Activated CD4-positive, alpha-beta T cell treated with anti-CD3 and anti-CD28 coated beads for 36 hours (primary cell): ENCODE measurements at regions of chr22 and their contacts with region 1.

Region 1: DNA sequence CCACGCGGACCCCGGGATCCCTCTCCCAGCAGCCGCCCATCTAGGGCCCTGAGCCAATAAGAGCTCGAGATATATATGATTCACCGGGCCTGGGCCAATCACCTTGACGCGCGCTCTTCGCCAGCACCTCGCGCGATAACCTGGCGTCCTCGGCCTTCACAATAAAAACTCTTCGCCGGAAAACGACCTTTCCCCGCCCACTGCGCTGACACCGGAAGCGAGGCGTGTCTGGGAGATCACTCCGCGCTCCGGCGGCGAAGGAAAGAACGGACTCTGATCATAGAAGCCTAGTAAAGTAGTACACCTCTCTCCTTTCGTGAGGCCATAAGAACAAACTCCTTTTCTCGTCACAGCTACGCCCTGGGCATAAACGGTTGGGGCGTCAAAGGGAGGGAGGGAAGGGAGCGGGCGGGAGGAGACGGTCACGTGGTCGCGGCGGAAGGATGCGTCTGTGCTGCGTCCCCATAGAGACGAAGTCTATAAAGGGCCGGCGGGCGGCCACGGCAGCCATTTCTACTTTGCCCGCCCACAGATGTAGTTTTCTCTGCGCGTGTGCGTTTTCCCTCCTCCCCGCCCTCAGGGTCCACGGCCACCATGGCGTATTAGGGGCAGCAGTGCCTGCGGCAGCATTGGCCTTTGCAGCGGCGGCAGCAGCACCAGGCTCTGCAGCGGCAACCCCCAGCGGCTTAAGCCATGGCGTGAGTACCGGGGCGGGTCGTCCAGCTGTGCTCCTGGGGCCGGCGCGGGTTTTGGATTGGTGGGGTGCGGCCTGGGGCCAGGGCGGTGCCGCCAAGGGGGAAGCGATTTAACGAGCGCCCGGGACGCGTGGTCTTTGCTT is at the start of gene ATF4:
- DNase-seq: peak; percentile 98
- ATAC-seq: peak; percentile 90
- H3K4me3 Mint-ChIP-seq: peak within 1 kb of the TSS; percentile 86
- H3K27ac Mint-ChIP-seq: peak within 1 kb of the TSS; percentile 99
- H3K4me1 Mint-ChIP-seq: peaks cover 67% of the 10 kb centered on the region
- H3K27me3 Mint-ChIP-seq: no peaks in the 10 kb centered on the region
- total RNA-seq, gene ATF4: 580 to 680 TPM

Region 2: DNA sequence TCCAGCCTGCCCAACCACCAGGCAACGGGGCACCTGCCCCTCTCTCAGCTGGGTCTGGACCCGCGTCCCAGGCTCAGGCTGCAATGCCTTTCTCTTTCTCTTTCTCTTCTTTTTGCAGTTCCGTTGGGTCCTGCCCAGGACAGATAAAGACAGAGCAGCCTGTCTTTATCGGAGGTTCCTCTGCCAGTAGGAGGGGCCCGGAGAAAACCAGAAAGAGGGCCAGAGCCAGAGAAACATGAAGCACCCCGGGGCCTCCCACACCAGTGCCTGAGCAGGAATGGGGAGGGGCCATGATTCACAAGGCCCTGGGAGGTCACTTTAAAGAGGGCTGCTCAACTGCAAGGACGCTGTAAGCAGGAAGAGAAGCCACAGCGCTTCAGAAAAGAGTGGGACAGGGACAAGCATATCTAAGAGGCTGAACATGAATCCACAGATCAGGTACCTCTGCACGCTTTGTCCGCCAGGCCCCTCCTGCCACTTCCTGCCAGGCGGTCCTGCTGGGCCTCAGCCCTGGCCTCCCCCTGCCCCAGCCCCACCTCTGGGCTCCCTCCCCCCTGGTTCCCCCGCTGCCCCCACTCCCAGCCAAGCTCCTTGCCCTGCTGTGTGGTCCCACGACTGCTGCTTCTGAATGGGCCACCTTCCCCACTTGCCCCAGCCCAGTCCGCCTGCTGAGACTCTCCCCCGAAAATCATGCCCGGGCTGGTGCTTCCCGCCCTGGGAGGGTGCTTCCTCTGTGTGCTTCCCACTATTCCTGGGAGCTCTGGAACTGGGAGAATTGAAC is 506.1 kb before region 1 on chr22 and contains the start of gene APOBEC3C:
- CTCF ChIA-PET with region 1: no interaction called
- POLR2A ChIA-PET with region 1: no interaction called
- intact Hi-C with region 1: loop called in 1 of 2 experiments (anchors 10 kb)
- DNase-seq: peak; percentile 89
- ATAC-seq: peak; percentile 96
- H3K4me3 Mint-ChIP-seq: peak within 1 kb of the TSS; percentile 93
- H3K27ac Mint-ChIP-seq: peak within 1 kb of the TSS; percentile 95
- H3K4me1 Mint-ChIP-seq: peaks cover 33% of the 10 kb centered on the region
- H3K27me3 Mint-ChIP-seq: no peaks in the 10 kb centered on the region
- total RNA-seq, gene APOBEC3C: 75.3 to 98.5 TPM

Region 3: GRCh38 chr22:39395936-39396796 is 124.1 kb before region 1 on chr22:
- CTCF ChIA-PET with region 1: no interaction called
- POLR2A ChIA-PET with region 1: interaction called, 9 read pairs
- intact Hi-C with region 1: loop called (anchors 1 to 10 kb)
- DNase-seq: no peak
- ATAC-seq: no peak
- H3K4me3 Mint-ChIP-seq: no peak overlapping the region
- H3K27ac Mint-ChIP-seq: no peak overlapping the region
- H3K4me1 Mint-ChIP-seq: peaks cover 9% of the 10 kb centered on the region
- H3K27me3 Mint-ChIP-seq: no peaks in the 10 kb centered on the region

Region 4: DNA sequence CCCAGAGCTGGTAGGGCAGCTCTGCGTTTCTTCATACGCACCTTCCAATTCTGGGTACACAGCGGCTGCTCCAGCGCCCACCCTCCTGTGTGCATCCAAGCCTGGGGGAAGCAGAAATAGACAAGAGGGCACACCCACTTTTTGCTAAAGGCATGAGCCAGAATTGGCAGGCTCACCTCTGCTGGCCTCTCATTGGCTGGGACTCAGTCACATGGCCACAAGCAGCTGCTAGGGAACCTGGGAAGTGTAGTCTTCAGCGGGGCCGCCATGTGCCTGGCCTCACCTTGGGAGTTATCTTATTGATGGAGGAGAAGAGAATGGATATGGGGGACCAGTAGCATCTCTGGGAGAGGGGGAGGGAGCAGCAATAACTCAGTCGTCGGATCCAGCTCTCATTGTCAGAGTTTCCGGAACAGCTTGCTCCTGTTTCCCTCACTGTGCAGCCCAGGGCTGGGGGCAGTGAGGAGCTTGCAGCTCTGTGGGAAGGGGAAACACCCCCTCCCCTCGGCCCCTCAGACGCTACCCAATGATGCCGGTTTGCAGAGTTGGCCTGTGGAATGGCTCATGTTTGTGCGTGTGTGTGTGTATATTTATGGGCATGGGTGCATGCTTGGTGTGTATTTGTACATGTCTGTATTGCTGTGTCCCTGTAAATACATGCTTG is 30.0 kb before region 1 on chr22:
- CTCF ChIA-PET with region 1: interaction called, 27 read pairs
- POLR2A ChIA-PET with region 1: interaction called, 7 read pairs
- intact Hi-C with region 1: loop called in 1 of 2 experiments (anchors 1 kb)
- DNase-seq: peak; percentile 89
- ATAC-seq: peak; percentile 100
- H3K4me3 Mint-ChIP-seq: no peak overlapping the region
- H3K27ac Mint-ChIP-seq: no peak overlapping the region
- H3K4me1 Mint-ChIP-seq: peaks cover 7% of the 10 kb centered on the region
- H3K27me3 Mint-ChIP-seq: no peaks in the 10 kb centered on the region

Region 5: DNA sequence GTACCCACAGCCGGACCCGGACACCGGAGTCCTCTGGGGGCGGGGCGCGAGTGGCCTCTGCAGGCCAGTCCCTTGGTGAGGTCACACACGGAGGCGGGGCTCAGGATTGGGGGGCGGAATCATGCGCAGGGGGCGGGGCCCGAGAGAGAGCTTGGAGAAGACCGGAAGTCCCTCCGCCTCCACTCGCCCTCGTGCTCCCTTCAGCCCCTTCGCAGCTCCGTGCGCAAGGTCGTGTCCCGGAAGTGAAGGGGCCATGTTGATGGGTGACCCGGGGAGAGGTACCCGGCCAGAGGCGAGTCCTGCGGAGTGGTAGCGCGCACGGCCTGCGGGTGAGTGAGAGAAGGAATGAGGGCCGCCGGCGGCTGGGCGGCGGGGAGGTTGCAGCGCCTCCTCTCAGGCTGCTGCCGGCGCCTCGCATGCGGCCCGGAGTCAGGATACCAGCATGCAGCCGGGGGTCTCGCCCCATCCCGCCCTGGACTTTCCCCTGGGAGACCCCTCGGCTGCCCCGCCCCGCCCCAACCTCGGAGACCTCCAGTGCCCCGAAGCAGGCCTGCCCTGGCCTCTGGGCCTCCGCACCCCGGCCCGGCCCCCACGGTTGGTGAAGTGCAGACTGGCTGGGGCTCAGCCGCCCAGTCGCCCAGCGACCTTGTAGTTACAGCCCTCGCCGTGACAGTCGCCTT is 18.0 kb before region 1 on chr22 and contains the start of gene MIEF1:
- CTCF ChIA-PET with region 1: interaction called, 13 read pairs
- POLR2A ChIA-PET with region 1: interaction called, 25 read pairs
- intact Hi-C with region 1: loop called (anchors 1 to 2 kb)
- DNase-seq: peak; percentile 98
- ATAC-seq: peak; percentile 98
- H3K4me3 Mint-ChIP-seq: peak within 1 kb of the TSS; percentile 76
- H3K27ac Mint-ChIP-seq: peak within 1 kb of the TSS; percentile 94
- H3K4me1 Mint-ChIP-seq: peaks cover 35% of the 10 kb centered on the region
- H3K27me3 Mint-ChIP-seq: no peaks in the 10 kb centered on the region
- total RNA-seq, gene MIEF1: 43.2 to 44.9 TPM

Region 6: DNA sequence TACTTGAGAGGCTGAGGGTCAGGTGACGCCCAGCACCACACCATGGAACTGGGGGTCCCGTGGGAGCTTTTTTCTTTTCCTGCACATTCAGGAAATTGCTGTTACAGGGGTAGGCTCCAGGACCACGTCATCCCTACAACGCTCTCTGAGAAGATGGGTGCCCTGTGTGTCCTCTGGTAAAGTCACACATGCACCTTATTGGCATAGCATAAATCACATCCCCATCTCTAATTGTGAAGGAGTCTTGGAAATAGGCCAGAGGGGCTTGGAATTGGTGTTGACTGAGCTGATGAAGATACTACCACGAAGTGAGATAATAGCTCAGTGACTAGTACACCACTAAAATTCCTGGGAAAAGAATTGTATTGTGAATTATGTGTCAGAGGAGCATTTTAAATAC is 715.0 kb after region 1 on chr22:
- CTCF ChIA-PET with region 1: no interaction called
- POLR2A ChIA-PET with region 1: no interaction called
- intact Hi-C with region 1: no loop called
- DNase-seq: no peak
- ATAC-seq: no peak
- H3K4me3 Mint-ChIP-seq: no peak overlapping the region
- H3K27ac Mint-ChIP-seq: no peak overlapping the region
- H3K4me1 Mint-ChIP-seq: peaks cover 54% of the 10 kb centered on the region
- H3K27me3 Mint-ChIP-seq: no peaks in the 10 kb centered on the region